PC-9 (cell line): ENCODE measurements at regions of chr10 and their contacts with region 1.

Region 1: DNA sequence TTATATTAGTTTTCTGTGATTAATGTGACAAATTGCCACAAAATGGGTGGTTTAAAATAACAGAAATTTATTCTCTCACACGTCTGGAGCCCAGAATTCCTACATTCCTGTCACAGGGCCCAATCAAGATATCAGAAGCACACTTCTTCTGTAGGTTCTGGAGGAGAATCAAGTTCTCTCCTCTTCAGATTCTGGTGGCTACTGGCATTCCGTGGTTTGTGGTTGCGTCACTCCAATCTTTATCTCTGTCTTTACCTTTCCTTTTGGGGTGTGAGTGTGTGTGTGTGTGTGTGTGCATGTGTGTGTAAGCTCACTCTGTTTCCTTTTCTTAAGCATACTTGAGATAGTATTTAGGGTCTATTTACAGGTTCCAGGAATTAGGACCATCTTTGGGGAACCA is 115.5 kb upstream of the DKK1 start:
- DNase-seq: no peak
- H3K4me3 ChIP-seq: no peak overlapping the region
- H3K27ac ChIP-seq: no peak overlapping the region
- H3K4me1 ChIP-seq: no peaks in the 10 kb centered on the region
- H3K27me3 ChIP-seq: no peaks in the 10 kb centered on the region
- CTCF ChIP-seq: no peak

Region 2: DNA sequence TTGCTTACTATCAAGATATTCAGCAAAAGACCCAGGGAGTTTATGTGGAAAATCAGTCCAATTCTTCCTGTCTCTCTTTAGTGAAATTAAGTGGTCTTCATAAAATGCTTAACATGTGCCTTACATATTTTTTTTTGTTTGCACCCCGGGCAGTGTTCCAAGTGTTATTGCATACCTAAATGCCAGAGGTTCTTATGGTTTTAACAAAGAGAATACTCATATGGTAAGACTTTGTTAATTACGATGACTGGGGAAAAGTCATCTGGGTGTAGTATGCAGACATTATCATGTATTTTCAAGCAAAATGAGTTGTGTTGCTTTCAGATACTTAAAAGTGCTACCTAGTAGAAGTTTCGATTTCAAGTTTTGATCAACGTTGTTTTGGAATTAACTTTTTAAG is 1041.6 kb before region 1 on chr10:
- CTCF ChIA-PET with region 1: no interaction called
- POLR2A ChIA-PET with region 1: no interaction called
- intact Hi-C with region 1: loop called (anchors 5 kb)
- DNase-seq: no peak
- H3K4me3 ChIP-seq: no peak overlapping the region
- H3K27ac ChIP-seq: no peak overlapping the region
- H3K4me1 ChIP-seq: no peaks in the 10 kb centered on the region
- H3K27me3 ChIP-seq: no peaks in the 10 kb centered on the region
- CTCF ChIP-seq: no peak

Region 3: DNA sequence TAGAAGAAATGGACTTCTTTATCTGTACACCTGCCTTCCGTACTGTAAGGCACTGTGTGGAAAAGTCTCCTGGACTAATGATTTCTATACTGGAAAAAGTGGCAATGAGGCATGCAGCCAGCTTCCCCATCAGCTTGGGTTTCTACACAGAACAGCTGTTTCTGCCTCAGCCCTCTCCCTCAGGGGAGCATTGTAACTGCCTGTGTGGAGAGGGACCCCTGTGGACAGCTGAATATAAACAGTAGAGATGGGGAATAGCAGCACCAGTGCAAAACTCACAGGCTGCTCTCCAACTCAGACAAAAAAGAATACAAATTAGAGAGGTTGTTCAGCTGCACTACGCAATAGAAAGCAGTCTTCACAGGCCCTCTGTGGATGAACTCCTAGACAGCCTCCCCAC is 1025.3 kb after region 1 on chr10:
- CTCF ChIA-PET with region 1: no interaction called
- POLR2A ChIA-PET with region 1: no interaction called
- intact Hi-C with region 1: no loop called
- DNase-seq: no peak
- H3K4me3 ChIP-seq: no peak overlapping the region
- H3K27ac ChIP-seq: no peak overlapping the region
- H3K4me1 ChIP-seq: no peaks in the 10 kb centered on the region
- H3K27me3 ChIP-seq: no peaks in the 10 kb centered on the region
- CTCF ChIP-seq: no peak